ENCODE measurements at regions of chr3 and their contacts with region 1.

Region 1: DNA sequence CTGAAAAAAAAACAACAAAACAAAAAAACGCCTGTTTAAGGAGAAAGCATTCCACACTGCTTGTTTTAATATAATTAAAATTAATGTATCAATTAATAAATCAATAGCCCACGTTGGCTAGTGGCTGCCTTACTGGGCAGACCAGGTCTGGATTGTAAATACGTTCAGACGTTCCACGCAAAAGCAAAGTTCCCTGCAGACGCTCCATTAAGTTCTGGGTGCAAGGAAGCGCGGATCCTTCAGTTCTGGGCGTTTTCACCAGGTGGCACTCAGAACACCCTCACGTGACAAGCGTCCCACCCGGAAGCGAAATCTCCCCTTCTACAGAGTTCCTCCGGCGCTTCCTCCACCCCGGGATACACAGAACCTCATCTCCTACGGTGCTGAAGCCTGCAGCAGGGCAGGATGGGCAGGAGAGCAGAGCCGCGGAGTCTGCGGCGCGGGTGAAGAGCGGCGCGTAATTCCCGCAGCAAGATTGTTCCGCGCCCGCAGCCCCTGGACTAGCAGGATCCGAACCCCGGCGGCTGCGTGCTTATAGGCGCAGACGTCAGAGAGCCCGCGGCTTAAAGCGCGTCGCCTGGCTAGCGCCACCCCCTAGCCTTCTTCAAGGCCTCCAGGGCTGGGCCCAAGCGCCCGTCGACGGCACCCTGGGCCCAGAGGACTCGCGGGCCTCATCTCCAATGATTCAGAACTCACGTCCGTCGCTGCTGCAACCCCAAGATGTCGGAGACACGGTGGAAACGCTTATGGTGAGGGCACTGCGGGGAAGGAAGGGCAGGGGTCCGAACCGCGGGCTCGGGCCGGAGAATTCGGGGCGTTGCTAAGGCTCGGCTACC is at the start of gene SLC25A38:
- DNase-seq: peak; percentile 88
- H3K4me3 Mint-ChIP-seq: peak within 1 kb of the TSS; percentile 92
- H3K27ac Mint-ChIP-seq: peak within 1 kb of the TSS; percentile 99
- H3K4me1 Mint-ChIP-seq: peaks cover 56% of the 10 kb centered on the region
- H3K27me3 Mint-ChIP-seq: no peaks in the 10 kb centered on the region
- total RNA-seq, gene SLC25A38: 34.2 to 35.8 TPM

Region 2: DNA sequence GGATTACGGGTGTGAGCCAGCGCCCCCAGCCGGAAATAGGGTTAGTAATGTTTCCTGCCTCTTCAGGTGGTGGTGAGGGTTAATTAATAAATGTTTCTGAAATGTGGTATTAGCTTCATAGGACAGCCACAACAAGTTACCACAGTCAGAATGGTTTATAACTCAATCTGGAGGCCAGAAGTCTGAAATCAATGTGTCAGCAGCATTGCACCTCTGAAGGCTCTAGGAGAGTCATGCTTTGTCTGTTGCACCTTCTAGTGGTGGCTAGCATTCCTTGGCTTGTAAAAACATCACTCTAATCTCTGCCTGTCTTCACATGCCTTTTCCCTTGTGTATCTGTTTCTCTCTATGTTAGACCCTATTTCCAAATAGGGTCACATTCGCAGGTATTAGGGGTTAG is 15.4 kb after region 1 on chr3:
- CTCF ChIA-PET with region 1: interaction called, 4 read pairs
- POLR2A ChIA-PET with region 1: interaction called, 10 read pairs
- DNase-seq: no peak
- H3K4me3 Mint-ChIP-seq: no peak overlapping the region
- H3K27ac Mint-ChIP-seq: peak overlapping the region; percentile 31
- H3K4me1 Mint-ChIP-seq: peaks cover 33% of the 10 kb centered on the region
- H3K27me3 Mint-ChIP-seq: no peaks in the 10 kb centered on the region

Region 3: DNA sequence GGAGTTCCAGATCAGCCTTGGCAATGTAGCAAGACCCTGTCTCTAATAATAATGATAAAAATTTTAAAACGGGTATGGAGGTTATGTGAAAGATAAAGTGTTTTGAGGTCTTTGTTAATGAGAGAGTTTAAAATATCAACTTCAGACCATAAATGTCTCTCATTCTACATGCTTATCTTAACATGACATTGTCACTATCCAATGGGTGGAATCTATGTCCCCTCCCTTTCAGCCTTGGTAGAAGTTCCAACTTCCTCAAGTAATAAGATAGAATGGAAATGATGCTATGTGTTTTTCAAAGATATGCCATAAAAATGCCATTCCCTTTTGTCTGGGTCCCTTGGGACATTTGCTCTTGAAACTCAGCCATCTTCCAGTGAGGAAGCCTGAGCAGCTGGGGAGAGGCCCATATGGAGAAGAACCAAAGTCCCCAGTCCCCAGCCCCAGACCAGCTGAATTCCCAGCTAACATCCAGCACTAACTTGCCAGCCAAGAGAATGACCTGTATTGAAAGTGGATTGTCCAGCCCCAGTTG is 40.2 kb after region 1 on chr3:
- CTCF ChIA-PET with region 1: no interaction called
- POLR2A ChIA-PET with region 1: no interaction called
- DNase-seq: no peak
- H3K4me3 Mint-ChIP-seq: no peak overlapping the region
- H3K27ac Mint-ChIP-seq: no peak overlapping the region
- H3K4me1 Mint-ChIP-seq: no peaks in the 10 kb centered on the region
- H3K27me3 Mint-ChIP-seq: peaks cover 2% of the 10 kb centered on the region

Region 4: GRCh38 chr3:39668420-39668819 is 285.2 kb after region 1 on chr3:
- CTCF ChIA-PET with region 1: no interaction called
- POLR2A ChIA-PET with region 1: no interaction called
- DNase-seq: no peak
- H3K4me3 Mint-ChIP-seq: no peak overlapping the region
- H3K27ac Mint-ChIP-seq: no peak overlapping the region
- H3K4me1 Mint-ChIP-seq: no peaks in the 10 kb centered on the region
- H3K27me3 Mint-ChIP-seq: peaks cover 1% of the 10 kb centered on the region

Region 5: DNA sequence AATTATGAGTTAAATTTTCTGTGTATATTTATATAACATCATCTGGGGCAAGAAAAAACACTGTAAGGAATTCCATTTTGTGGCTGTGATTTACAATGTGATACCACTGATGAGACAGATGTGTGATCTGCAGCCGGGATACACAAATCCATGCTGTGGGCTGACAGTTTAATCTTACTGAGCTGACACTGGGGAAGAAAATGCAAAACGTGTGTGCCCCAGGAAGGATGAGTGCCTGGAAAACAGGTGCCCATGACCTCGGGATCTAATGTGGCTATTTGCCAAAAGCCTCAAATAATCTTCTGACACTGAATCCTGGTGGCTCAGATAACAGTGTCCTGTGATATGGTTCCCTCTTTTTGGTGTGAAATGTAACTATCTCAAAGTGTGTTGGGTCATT is 436.6 kb after region 1 on chr3:
- CTCF ChIA-PET with region 1: no interaction called
- POLR2A ChIA-PET with region 1: no interaction called
- DNase-seq: no peak
- H3K4me3 Mint-ChIP-seq: no peak overlapping the region
- H3K27ac Mint-ChIP-seq: no peak overlapping the region
- H3K4me1 Mint-ChIP-seq: no peaks in the 10 kb centered on the region
- H3K27me3 Mint-ChIP-seq: peaks cover under 1% of the 10 kb centered on the region

Measured in activated CD4-positive, alpha-beta memory T cell treated with anti-CD3 and anti-CD28 coated beads, Interleukin-2, amount 10 ng/mL, durations not matched to agents 7 days and 5 days (primary cell).